Activated T-helper 1 cell treated with anti-CD3 and anti-CD28 coated beads, Interleukin-12 subunit alpha, Interleukin-12 subunit beta, Interleukin-2, Interleukin-4 antibody, amounts not matched to agents 30 ng/mL and 10 ng/mL and 1 ng/mL, durations not matched to agents 14 hours and 24 hours and 36 hours (primary cell): ENCODE measurements at regions of chrX and their contacts with region 1.

Region 1: GRCh38 chrX:53544940-53545339 is 110.8 kb upstream of the HSD17B10 start:
- DNase-seq: no peak
- H3K4me3 Mint-ChIP-seq: no peak overlapping the region
- H3K27ac Mint-ChIP-seq: no peak overlapping the region
- H3K4me1 Mint-ChIP-seq: peaks cover 10% of the 10 kb centered on the region
- H3K27me3 Mint-ChIP-seq: no peaks in the 10 kb centered on the region

Region 2: GRCh38 chrX:53403535-53403934 is 141.4 kb before region 1 on chrX:
- intact Hi-C with region 1: loop called (anchors 10 kb)
- DNase-seq: no peak
- H3K4me3 Mint-ChIP-seq: no peak overlapping the region
- H3K27ac Mint-ChIP-seq: no peak overlapping the region
- H3K4me1 Mint-ChIP-seq: no peaks in the 10 kb centered on the region
- H3K27me3 Mint-ChIP-seq: no peaks in the 10 kb centered on the region